MCF 10A (cell line): ENCODE measurements at regions of chr10 and their contacts with region 1.

Region 1: GRCh38 chr10:73997787-73998622 is at the start of gene VCL:
- DNase-seq: peak; percentile 98
- H3K4me3 Mint-ChIP-seq: peak within 1 kb of the TSS; percentile 88
- H3K27ac Mint-ChIP-seq: peak within 1 kb of the TSS; percentile 95
- H3K4me1 Mint-ChIP-seq: peaks cover 25% of the 10 kb centered on the region
- H3K27me3 Mint-ChIP-seq: no peaks in the 10 kb centered on the region
- CTCF ChIP-seq: no peak
- total RNA-seq, gene VCL: 90.2 and 90.9 TPM in 2 replicates

Region 2: GRCh38 chr10:73609116-73609515 is 388.9 kb before region 1 on chr10:
- CTCF ChIA-PET with region 1: no interaction called
- POLR2A ChIA-PET with region 1: no interaction called
- intact Hi-C with region 1: no loop called
- DNase-seq: no peak
- H3K4me3 Mint-ChIP-seq: no peak overlapping the region
- H3K27ac Mint-ChIP-seq: no peak overlapping the region
- H3K4me1 Mint-ChIP-seq: no peaks in the 10 kb centered on the region
- H3K27me3 Mint-ChIP-seq: no peaks in the 10 kb centered on the region
- CTCF ChIP-seq: no peak

Region 3: DNA sequence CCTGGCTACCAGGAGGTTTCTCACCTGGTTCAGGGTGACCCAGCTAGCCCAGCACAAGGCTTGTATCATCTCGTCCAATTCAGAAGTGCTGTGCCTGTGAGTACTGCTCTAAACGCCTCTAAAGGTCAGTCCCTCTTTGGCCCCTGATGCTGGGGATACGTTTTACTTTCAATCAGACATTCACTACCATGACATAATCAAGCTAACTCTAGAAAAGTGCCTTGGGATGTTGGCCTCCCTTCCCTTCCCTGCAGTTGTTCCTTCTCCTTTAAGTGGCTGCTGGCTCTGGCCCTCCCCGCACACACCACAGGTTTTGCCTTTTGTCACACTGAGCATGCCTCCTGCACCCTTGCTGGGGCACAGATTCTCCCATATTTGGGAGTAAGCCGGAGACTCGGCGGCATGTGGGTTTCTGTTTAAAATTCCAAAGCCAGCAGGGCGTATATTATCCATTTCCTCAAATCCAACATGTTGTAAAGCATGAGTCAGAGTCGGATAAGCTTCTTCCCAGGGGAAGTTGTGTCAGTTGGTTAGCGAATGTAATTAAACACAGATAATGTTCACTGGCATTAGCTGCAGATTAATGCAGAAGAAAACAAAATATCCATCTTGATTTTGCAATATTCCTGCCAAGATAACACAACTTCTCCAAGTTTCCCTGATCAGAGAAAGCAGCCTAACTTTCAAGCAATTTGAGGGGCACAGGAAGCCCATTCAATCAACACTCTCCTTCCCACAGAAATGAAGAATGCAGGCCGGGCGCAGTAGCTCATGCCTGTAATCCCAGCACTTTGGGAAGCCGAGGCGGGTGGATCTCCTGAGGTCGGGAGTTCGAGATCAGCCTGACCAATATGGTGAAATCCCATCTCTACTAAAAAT is 31.9 kb before region 1 on chr10:
- CTCF ChIA-PET with region 1: no interaction called
- POLR2A ChIA-PET with region 1: interaction called, 16 read pairs
- intact Hi-C with region 1: no loop called
- DNase-seq: peak; percentile 98
- H3K4me3 Mint-ChIP-seq: peak overlapping the region; percentile 69
- H3K27ac Mint-ChIP-seq: peak overlapping the region; percentile 99
- H3K4me1 Mint-ChIP-seq: peaks cover 17% of the 10 kb centered on the region
- H3K27me3 Mint-ChIP-seq: no peaks in the 10 kb centered on the region
- CTCF ChIP-seq: no peak

Region 4: GRCh38 chr10:74021248-74022055 is 23.4 kb after region 1 on chr10:
- CTCF ChIA-PET with region 1: interaction called, 9 read pairs
- POLR2A ChIA-PET with region 1: interaction called, 64 read pairs
- intact Hi-C with region 1: no loop called
- DNase-seq: peak; percentile 79
- H3K4me3 Mint-ChIP-seq: peak overlapping the region; percentile 53
- H3K27ac Mint-ChIP-seq: peak overlapping the region; percentile 43
- H3K4me1 Mint-ChIP-seq: peaks cover 28% of the 10 kb centered on the region
- H3K27me3 Mint-ChIP-seq: no peaks in the 10 kb centered on the region
- CTCF ChIP-seq: no peak

Region 5: GRCh38 chr10:74035303-74035702 is 37.3 kb after region 1 on chr10:
- CTCF ChIA-PET with region 1: interaction called, 11 read pairs
- POLR2A ChIA-PET with region 1: interaction called, 12 read pairs
- intact Hi-C with region 1: no loop called
- DNase-seq: no peak
- H3K4me3 Mint-ChIP-seq: no peak overlapping the region
- H3K27ac Mint-ChIP-seq: peak overlapping the region; percentile 0
- H3K4me1 Mint-ChIP-seq: peaks cover 38% of the 10 kb centered on the region
- H3K27me3 Mint-ChIP-seq: no peaks in the 10 kb centered on the region
- CTCF ChIP-seq: peak; percentile 11

Region 6: DNA sequence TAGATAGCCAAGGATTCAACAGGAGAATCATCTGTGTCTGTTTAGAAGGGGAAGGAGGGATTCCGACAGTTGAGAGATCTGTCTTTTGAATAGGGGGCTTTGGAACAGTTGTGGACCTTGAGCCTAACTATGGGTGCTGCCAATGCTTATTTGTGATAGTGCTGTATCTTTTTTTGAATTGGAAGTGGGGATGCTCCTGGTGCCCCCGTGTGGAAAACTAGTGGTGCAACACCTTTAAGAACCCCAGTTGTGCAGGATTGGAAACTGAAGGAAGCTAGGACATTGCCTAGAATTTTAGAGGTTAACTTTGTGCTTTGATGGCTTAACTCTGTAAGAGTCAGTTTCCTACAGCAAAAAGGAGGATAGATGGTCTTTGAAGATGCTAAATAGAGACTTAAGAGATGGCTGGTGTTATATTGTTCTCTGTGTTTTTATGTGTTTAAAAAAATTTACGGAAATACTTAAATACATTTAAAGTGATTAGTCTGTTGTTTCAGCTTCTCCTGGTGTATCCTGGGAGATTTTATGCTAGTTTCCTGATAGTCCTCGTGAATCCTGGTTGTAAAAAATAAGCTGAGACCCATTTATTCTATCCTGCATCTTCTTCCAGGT is 83.3 kb after region 1 on chr10:
- CTCF ChIA-PET with region 1: interaction called, 30 read pairs
- POLR2A ChIA-PET with region 1: interaction called, 55 read pairs
- intact Hi-C with region 1: loop called (anchors 1 kb)
- DNase-seq: peak; percentile 76
- H3K4me3 Mint-ChIP-seq: no peak overlapping the region
- H3K27ac Mint-ChIP-seq: no peak overlapping the region
- H3K4me1 Mint-ChIP-seq: peaks cover 23% of the 10 kb centered on the region
- H3K27me3 Mint-ChIP-seq: no peaks in the 10 kb centered on the region
- CTCF ChIP-seq: peak; percentile 71